Calu3 (cell line): ENCODE measurements at regions of chr4 and their contacts with region 1.

Region 1: GRCh38 chr4:64767547-64767946 is 358.3 kb upstream of the TECRL start:
- DNase-seq: no peak
- H3K4me3 Mint-ChIP-seq: no peak overlapping the region
- H3K27ac Mint-ChIP-seq: no peak overlapping the region
- H3K4me1 Mint-ChIP-seq: no peaks in the 10 kb centered on the region
- H3K27me3 Mint-ChIP-seq: no peaks in the 10 kb centered on the region
- CTCF ChIP-seq: no peak

Region 2: DNA sequence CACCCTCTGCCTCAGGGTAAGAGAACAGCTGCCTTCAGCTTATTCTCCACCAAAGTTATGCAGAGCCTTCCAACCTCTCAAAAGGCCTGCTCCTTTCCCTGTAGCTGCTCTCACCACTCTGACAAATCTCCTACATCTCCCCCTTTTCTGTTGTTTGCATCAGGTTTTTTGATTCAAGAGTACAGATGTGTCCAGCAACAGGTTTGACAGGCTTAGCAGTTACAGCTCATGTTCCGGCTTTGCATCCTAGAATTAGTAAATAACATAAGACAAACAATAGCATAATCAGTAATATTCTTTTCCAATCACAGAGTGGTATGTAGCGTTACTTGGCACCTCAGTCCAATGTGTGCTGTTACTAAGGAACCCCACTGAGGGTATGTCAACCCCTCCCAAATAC is 144.2 kb before region 1 on chr4:
- CTCF ChIA-PET with region 1: no interaction called
- intact Hi-C with region 1: loop called (anchors 10 kb)
- DNase-seq: no peak
- H3K4me3 Mint-ChIP-seq: no peak overlapping the region
- H3K27ac Mint-ChIP-seq: no peak overlapping the region
- H3K4me1 Mint-ChIP-seq: no peaks in the 10 kb centered on the region
- H3K27me3 Mint-ChIP-seq: no peaks in the 10 kb centered on the region
- CTCF ChIP-seq: no peak

Region 3: DNA sequence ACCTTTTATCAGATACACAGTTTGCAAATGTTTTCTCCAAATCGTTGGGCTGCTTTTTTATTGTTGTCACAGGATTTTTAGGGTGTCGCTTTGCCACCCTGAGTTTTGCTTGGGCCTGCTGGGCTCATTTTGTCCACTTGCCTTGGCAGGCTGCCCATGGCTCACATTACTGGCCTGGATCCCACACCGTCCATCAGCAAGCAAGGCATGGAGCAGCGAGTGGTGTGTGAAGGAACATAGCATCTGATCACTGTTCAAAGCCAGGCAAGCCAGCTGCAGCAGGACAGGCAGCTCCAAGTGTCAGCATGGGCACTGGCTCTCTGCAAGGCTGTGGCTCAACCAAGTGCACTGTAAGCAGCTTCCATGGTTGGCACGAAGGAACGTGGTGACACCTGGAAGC is 96.9 kb before region 1 on chr4:
- CTCF ChIA-PET with region 1: no interaction called
- intact Hi-C with region 1: no loop called
- DNase-seq: no peak
- H3K4me3 Mint-ChIP-seq: no peak overlapping the region
- H3K27ac Mint-ChIP-seq: no peak overlapping the region
- H3K4me1 Mint-ChIP-seq: no peaks in the 10 kb centered on the region
- H3K27me3 Mint-ChIP-seq: no peaks in the 10 kb centered on the region
- CTCF ChIP-seq: no peak